ENCODE measurements at regions of chr2 and their contacts with region 1.

Region 1: GRCh38 chr2:198296665-198297308 is 492.4 kb downstream of the PLCL1 start:
- DNase-seq: peak; percentile 58
- H3K4me3 Mint-ChIP-seq: no peak overlapping the region
- H3K27ac Mint-ChIP-seq: no peak overlapping the region
- H3K4me1 Mint-ChIP-seq: no peaks in the 10 kb centered on the region
- H3K27me3 Mint-ChIP-seq: no peaks in the 10 kb centered on the region
- CTCF ChIP-seq: peak; percentile 88

Region 2: GRCh38 chr2:197705121-197705911 is 591.5 kb before region 1 on chr2 and contains the start of gene MARS2:
- CTCF ChIA-PET with region 1: no interaction called
- intact Hi-C with region 1: loop called (anchors 5 kb)
- DNase-seq: peak; percentile 92
- H3K4me3 Mint-ChIP-seq: peak within 1 kb of the TSS; percentile 89
- H3K27ac Mint-ChIP-seq: peak within 1 kb of the TSS; percentile 80
- H3K4me1 Mint-ChIP-seq: peaks cover 27% of the 10 kb centered on the region
- H3K27me3 Mint-ChIP-seq: no peaks in the 10 kb centered on the region
- CTCF ChIP-seq: no peak
- total RNA-seq, gene MARS2: 16.9 and 17.7 TPM in 2 replicates

Region 3: DNA sequence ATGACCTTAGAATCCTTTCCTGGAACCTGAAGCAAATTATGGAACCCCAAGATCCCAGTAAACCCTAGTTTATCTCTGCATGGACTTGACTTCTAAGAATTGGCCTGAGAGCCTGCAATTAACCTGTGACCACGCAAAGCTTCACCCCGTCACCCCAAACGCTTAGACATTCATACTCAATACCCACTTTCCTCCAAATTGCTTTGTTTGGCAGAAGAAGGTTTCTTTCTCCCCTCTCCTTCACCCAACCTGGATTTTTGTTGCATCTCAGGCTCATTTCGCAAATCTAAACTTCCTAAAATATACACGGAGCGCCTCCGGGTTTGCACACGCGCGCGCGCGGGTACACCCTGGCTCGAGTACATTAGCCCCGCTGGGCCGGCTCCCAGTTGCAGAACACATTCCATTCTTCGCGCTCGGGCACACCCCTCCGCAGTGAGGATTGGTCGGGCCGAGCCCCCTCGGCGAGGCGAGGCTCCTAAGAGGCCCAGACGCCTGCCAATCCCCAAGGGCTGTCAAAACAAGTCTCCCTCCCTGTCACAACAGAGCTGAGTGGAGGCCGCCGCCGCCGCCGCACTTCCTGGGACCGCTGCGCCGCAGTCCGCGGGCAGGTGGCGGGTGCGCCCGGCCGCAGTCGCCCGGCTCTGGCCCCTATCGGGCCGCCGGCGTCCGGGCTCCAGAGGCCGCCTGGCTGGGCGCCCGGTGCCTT is 492.6 kb before region 1 on chr2 and contains the start of gene PLCL1:
- CTCF ChIA-PET with region 1: interaction called, 9 read pairs
- intact Hi-C with region 1: loop called (anchors 1 kb)
- DNase-seq: peak; percentile 91
- H3K4me3 Mint-ChIP-seq: peak within 1 kb of the TSS; percentile 92
- H3K27ac Mint-ChIP-seq: no peak within 1 kb of the TSS
- H3K4me1 Mint-ChIP-seq: peaks cover 17% of the 10 kb centered on the region
- H3K27me3 Mint-ChIP-seq: peaks cover 72% of the 10 kb centered on the region
- CTCF ChIP-seq: no peak
- total RNA-seq, gene PLCL1: 0.07 TPM in 1 of 2 replicates, not detected in the other

Region 4: DNA sequence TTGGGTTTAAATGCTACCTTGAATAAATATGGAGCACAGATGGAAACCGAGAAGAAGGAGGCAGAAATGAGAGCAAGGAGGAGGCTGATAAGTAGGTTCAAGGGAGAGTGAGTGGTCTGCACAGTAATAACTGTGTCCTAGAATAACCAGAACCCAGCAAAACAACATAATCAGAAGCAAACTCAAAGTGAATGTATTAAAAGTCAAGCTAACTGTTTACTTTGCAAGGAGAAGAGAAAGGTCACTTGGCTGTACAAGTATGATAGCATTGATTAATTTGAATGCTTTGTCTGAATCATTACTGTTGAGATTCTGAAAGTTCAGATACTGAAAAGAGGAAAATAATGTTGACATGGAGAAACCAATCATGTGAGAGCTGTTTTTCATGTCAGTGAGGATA is 233.5 kb before region 1 on chr2:
- CTCF ChIA-PET with region 1: interaction called, 3 read pairs
- intact Hi-C with region 1: loop called (anchors 10 kb)
- DNase-seq: no peak
- H3K4me3 Mint-ChIP-seq: no peak overlapping the region
- H3K27ac Mint-ChIP-seq: no peak overlapping the region
- H3K4me1 Mint-ChIP-seq: peaks cover 16% of the 10 kb centered on the region
- H3K27me3 Mint-ChIP-seq: no peaks in the 10 kb centered on the region
- CTCF ChIP-seq: no peak

Region 5: GRCh38 chr2:198127627-198128026 is 169.2 kb before region 1 on chr2:
- CTCF ChIA-PET with region 1: interaction called, 4 read pairs
- intact Hi-C with region 1: loop called (anchors 2 kb)
- DNase-seq: peak; percentile 46
- H3K4me3 Mint-ChIP-seq: no peak overlapping the region
- H3K27ac Mint-ChIP-seq: no peak overlapping the region
- H3K4me1 Mint-ChIP-seq: no peaks in the 10 kb centered on the region
- H3K27me3 Mint-ChIP-seq: peaks cover 37% of the 10 kb centered on the region
- CTCF ChIP-seq: peak; percentile 45

Measured in Calu3 (cell line).